ENCODE measurements at regions of chr1 and their contacts with region 1.

Region 1: DNA sequence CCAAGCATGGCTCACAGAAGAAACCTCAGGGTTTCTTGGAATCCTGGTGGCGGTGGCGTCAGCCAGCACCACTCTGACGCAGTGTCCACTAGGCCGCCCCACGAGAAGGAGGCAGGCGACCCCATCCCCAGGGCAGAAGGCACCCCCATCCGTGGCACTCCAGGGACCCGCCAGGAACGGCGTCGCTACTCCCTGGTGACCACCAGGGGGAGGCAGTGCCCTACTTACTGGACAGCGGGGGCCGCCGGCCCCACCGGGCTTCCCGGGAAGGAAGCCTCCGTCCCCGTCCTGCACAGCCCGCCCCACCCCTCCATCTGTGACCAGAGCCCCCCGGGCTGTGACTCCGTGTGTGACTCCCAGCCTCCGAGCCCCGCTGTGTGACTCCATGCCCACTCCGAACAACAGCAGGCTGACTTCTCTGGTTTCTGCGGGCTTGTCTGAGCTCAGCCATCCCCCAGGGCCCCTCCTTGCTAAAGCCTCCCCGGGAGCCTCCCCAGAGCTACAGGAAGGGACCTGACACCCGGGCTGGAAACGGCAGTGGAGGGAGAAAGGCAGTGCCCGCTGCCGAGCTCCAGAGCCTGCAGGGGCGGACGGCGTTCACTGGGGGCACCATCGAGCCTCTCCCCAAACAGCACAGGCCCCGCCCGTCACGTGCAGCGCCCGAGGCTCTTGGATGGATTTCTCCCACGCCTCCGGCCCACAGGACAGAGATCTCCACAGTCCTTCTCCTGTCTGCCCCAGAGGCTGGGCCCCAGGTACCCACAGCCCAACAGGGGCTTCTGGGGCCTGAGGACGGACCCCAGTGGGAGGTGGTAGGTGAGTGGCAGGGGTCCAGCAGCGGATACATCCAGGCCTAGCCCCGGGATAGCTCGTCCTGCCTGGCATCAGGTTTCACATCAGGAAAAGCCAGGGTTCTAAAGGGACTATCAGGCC is 21.1 kb downstream of the KIF17 start:
- DNase-seq: peak; percentile 1
- ATAC-seq: peak; percentile 99
- H3K4me3 ChIP-seq: peak overlapping the region; percentile 94
- H3K27ac ChIP-seq: no peak overlapping the region
- H3K4me1 ChIP-seq: peaks cover 6% of the 10 kb centered on the region
- H3K27me3 ChIP-seq: no peaks in the 10 kb centered on the region
- CTCF ChIP-seq: peak; percentile 73 to 97 (median 89)
- EP300 ChIP-seq: no peak
- POLR2A ChIP-seq: no peak
- RAD21 ChIP-seq: peak; percentile 81

Region 2: GRCh38 chr1:20678599-20678998 is 18.1 kb before region 1 on chr1:
- CTCF ChIA-PET with region 1: interaction called, 13 read pairs
- POLR2A ChIA-PET with region 1: no interaction called
- RAD21 ChIA-PET with region 1: no interaction called
- SMC1A ChIA-PET with region 1: interaction called, 3 read pairs
- in situ Hi-C with region 1: no loop called
- intact Hi-C with region 1: no loop called
- DNase-seq: peak; percentile 57
- ATAC-seq: peak; percentile 89
- H3K4me3 ChIP-seq: peak overlapping the region; percentile 41; the same call in 1 of the 2 replicates
- H3K27ac ChIP-seq: no peak overlapping the region
- H3K4me1 ChIP-seq: peaks cover 7% of the 10 kb centered on the region
- H3K27me3 ChIP-seq: peaks cover 2 to 3% of the 10 kb centered on the region in 2 experiments
- CTCF ChIP-seq: no peak
- EP300 ChIP-seq: peak; percentile 24 to 42; a peak in 1 of 4 replicates
- POLR2A ChIP-seq: no peak
- RAD21 ChIP-seq: no peak

Region 3: DNA sequence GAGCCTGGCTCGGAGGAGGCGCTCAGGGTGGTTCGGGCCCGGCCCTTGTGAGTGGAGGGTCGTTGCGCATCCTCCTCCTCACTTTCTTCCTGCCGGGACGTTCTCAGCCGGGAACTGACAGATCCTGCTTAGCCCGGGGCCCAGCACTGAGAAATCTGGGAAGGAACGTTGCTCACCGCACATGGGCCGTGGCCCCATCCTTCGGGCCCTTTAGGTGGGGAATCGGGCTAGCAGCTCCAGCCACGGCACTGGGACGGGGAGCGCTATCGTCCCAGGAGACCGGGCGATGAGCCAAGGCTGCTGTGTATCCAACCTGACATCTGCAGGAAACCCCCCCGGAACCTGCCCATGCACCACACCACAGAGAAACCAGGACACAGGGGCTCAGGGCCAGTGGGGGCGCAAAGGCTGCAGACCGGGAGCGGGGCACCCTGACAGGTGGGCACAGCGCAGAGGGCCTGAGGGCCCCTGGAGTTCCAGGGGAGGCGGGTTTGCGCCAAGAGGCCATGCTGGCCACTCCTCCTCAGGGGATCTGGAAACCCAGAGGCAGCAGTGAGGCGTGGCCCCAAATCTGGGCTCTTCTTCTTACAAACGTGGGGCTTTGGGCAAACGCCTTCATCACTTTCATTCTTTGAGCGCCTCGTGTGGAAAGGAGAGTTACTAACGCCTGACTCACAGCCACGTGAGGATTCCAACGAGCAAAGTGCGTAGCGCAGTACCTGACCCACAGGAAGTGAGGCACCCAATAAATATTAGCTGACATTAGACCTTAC is 36.1 kb after region 1 on chr1 and contains the start of gene SH2D5:
- CTCF ChIA-PET with region 1: interaction called, 14 read pairs
- POLR2A ChIA-PET with region 1: no interaction called
- RAD21 ChIA-PET with region 1: interaction called, 6 read pairs
- SMC1A ChIA-PET with region 1: interaction called, 3 read pairs
- in situ Hi-C with region 1: no loop called
- intact Hi-C with region 1: no loop called
- DNase-seq: peak; percentile 50
- ATAC-seq: peak; percentile 84
- H3K4me3 ChIP-seq: peak within 1 kb of the TSS; percentile 50
- H3K27ac ChIP-seq: no peak within 1 kb of the TSS
- H3K4me1 ChIP-seq: peaks cover 10% of the 10 kb centered on the region
- H3K27me3 ChIP-seq: peaks cover 8 to 9% of the 10 kb centered on the region in 2 experiments; a peak in 3 of 4 replicates
- CTCF ChIP-seq: peak; percentile 36 to 46 (median 44); a peak in 5 of 6 replicates
- EP300 ChIP-seq: no peak
- POLR2A ChIP-seq: no peak
- RAD21 ChIP-seq: peak; percentile 11; the same call in 1 of the 2 replicates
- polyA plus RNA-seq, gene SH2D5: 0.03 TPM in 1 of 2 experiments, not detected in the other

Region 4: DNA sequence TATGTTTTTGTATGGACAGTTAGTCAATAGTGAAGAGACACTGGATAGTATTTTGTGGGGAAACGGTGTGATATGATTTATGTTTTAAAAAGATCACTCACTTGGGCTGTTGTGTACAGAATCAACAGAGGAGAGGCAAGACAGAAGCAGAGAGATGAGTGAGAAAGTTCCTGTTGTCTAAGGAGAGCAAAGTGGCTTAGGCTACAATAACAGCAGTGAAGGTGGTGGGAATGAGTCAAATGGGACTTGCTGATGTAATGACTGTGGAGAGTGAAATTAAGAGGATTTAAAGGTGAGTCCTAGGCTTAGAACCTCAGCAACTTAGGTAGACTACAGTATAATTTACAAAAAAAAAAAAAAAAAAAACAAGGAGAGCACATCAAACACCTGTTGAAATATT is 259.6 kb after region 1 on chr1:
- CTCF ChIA-PET with region 1: no interaction called
- POLR2A ChIA-PET with region 1: no interaction called
- RAD21 ChIA-PET with region 1: no interaction called
- SMC1A ChIA-PET with region 1: no interaction called
- in situ Hi-C with region 1: no loop called
- intact Hi-C with region 1: no loop called
- DNase-seq: no peak
- ATAC-seq: no peak
- H3K4me3 ChIP-seq: no peak overlapping the region
- H3K27ac ChIP-seq: no peak overlapping the region
- H3K4me1 ChIP-seq: no peaks in the 10 kb centered on the region
- H3K27me3 ChIP-seq: no peaks in the 10 kb centered on the region
- CTCF ChIP-seq: no peak
- EP300 ChIP-seq: no peak
- POLR2A ChIP-seq: no peak
- RAD21 ChIP-seq: no peak

Region 5: GRCh38 chr1:20981915-20982314 is 285.3 kb after region 1 on chr1:
- CTCF ChIA-PET with region 1: interaction called, 7 read pairs
- POLR2A ChIA-PET with region 1: no interaction called
- RAD21 ChIA-PET with region 1: interaction called, 3 read pairs
- SMC1A ChIA-PET with region 1: no interaction called
- in situ Hi-C with region 1: no loop called
- intact Hi-C with region 1: loop called (anchors 10 kb)
- DNase-seq: no peak
- ATAC-seq: peak; percentile 61; the same call in 2 of the 3 replicates
- H3K4me3 ChIP-seq: no peak overlapping the region
- H3K27ac ChIP-seq: no peak overlapping the region
- H3K4me1 ChIP-seq: no peaks in the 10 kb centered on the region
- H3K27me3 ChIP-seq: no peaks in the 10 kb centered on the region
- CTCF ChIP-seq: peak; percentile 33 to 51 (median 33); a peak in 4 of 6 replicates
- EP300 ChIP-seq: no peak
- POLR2A ChIP-seq: no peak
- RAD21 ChIP-seq: peak; percentile 54

Region 6: DNA sequence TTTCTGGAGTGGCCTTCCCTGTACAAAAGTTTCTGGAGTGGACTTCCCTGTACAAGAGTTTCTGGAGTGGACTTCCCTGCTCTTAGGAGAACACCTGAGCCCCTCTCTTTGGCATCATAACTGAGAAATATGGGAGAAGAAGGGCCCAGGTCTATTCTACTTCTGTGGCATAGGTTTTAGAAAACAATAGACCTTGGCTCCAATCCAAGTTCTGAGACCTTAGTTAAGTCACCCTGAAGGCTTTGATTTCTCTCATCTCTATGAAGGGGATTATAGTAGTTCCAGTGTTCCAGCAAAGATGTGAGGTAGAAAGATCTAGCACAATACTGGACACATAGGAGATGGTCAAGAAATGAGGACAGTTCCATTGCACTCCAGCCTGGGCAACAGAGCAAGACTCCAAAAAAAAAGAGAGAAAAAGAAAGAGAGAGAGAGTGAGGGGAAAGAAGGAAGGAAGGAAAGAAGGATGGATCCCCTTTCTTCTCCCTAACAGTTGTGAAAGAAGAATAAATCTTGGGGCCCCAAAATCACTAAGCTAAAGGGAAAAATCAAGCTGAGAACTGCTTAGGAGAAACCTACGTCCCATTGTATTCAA is 493.3 kb after region 1 on chr1:
- CTCF ChIA-PET with region 1: interaction called, 120 read pairs
- POLR2A ChIA-PET with region 1: interaction called, 3 read pairs
- RAD21 ChIA-PET with region 1: interaction called, 43 read pairs
- SMC1A ChIA-PET with region 1: interaction called, 33 read pairs
- in situ Hi-C with region 1: loop called (anchors 5 kb)
- intact Hi-C with region 1: loop called (anchors 2 kb)
- DNase-seq: no peak
- ATAC-seq: no peak
- H3K4me3 ChIP-seq: no peak overlapping the region
- H3K27ac ChIP-seq: no peak overlapping the region
- H3K4me1 ChIP-seq: no peaks in the 10 kb centered on the region
- H3K27me3 ChIP-seq: no peaks in the 10 kb centered on the region
- CTCF ChIP-seq: no peak
- EP300 ChIP-seq: no peak
- POLR2A ChIP-seq: no peak
- RAD21 ChIP-seq: no peak

Measured in GM12878 (cell line).